ENCODE measurements at regions of chr13 and their contacts with region 1.

Region 1: DNA sequence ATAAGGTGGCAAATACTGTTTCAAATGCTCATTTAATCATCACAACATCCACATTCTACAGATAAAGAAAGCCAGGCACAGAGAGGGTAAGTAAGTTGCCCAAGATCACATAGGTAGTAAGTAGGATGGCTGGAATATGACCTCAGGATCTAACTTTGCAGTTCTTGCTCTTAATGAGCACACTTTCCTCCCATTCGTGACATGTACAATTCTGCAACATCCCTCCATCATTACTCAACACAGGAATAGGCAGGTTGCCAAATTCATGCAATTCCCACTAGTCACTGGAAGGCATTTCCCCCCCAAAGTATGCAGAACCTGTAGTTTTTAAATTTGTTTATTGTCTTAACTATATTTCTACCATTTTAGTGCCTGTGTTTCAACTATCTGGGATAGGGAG is 109.2 kb downstream of the OLFM4 start:
- DNase-seq: no peak
- H3K4me3 ChIP-seq: no peak overlapping the region
- H3K27ac ChIP-seq: no peak overlapping the region
- H3K27me3 ChIP-seq: peaks cover 0 to 5% (median 0%) of the 10 kb centered on the region in 45 donors
- CTCF ChIP-seq: no peak

Region 2: DNA sequence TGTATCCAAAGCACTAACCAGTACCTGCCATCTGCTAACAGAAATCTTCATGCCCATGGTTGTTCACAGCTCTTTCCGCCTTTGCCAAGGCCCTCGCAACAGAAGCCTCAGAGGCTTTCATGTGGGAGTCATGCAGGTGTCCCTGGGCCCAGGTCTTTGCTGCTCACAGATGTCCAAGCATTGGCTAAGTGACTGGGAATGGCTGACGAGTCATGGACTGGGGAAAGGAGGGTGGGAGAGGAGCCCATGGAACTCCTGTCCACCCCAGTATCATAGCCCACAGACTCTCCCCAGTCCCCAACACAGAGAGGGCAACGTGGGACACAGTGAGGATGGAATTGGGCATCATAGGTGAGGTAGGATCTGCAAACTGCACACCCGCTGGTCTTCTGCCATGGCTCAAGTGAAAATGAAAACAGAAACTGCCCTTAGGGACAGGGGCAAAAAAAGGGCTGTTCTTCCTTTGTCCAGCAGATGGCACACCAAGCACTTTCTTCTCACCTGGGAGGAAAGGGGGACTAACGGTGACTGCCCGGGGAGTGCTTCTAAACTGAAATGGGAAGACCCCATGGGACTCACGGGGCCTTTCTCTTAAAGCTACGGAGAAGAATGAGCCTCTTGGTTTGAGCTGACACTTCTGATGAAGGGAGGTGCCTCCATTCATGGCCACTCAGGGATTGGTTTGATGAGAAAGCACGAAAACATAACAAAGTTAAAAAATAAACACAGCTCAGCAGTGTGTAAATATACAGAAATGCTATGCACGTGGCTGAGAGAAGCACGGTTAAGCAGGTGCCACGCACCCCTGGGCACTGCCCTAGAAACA is 1322.7 kb before region 1 on chr13:
- intact Hi-C with region 1: no loop called
- DNase-seq: peak in 4 of 10 donors; percentile 28 to 57 (median 52)
- H3K4me3 ChIP-seq: peak overlapping the region in 39 of 59 donors; percentile 3 to 48 (median 26)
- H3K27ac ChIP-seq: peak overlapping the region in 2 of 59 donors; percentile 10 to 46
- H3K27me3 ChIP-seq: no peaks in the 10 kb centered on the region
- CTCF ChIP-seq: peak; percentile 67 to 92 (median 83)

Region 3: GRCh38 chr13:52961196-52961910 is 176.4 kb before region 1 on chr13:
- intact Hi-C with region 1: loop called in 1 of 2 experiments (anchors 5 kb)
- DNase-seq: no peak
- H3K4me3 ChIP-seq: no peak overlapping the region
- H3K27ac ChIP-seq: no peak overlapping the region
- H3K27me3 ChIP-seq: no peaks in the 10 kb centered on the region
- CTCF ChIP-seq: no peak

Region 4: DNA sequence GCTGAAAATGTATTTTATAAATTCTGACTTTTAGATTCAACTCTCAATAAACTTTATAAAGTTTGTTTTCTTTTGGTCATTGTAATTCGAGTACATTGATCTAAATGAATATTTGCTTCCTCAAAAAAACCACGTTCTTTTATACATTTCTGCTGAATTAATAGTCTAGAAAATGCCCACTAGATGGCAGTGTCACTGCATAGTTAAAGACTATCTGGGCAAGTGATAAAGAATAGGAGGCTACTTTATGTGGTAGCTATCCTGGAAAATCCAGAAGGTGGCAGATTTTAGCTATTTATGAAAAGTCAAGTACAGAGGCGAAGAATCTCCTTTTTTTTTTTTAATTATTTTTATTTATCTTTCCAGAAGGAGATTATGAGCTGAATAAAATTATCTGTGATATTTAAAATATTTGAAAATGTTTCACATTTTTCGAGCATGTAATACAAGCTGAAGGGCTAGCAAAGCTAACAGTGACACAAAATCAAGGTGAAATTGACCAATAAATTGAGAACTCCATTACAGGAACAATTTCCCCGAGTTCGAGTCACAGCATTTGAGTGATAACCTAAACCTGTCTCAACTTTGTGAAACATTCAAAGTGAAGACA is 112.6 kb after region 1 on chr13:
- intact Hi-C with region 1: no loop called
- DNase-seq: peak in 1 of 10 donors; percentile 44
- H3K4me3 ChIP-seq: no peak overlapping the region
- H3K27ac ChIP-seq: peak overlapping the region in 12 of 59 donors; percentile 2 to 66 (median 38)
- H3K27me3 ChIP-seq: peaks cover 0 to 4% (median 0%) of the 10 kb centered on the region in 45 donors
- CTCF ChIP-seq: peak; percentile 87 to 100 (median 95)

Region 5: DNA sequence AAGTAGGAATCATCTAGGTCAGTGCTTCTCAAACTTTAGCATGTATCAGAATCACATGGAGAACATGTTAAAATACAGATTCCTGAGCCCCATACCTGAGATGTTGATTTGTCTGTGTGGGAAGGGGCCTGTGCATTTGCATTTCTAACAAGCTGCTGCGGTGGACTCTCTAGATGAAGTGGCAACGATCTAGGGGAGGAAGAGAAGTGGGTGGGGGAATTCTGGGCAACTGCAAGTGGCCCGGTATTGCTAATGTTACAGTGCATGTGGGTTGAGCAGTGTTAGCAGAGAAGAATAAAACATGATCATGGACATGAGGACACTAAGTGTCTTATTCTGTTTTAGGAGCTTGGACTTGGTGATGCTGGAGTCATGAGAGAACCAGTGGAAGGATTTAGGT is 219.8 kb after region 1 on chr13:
- intact Hi-C with region 1: no loop called
- DNase-seq: no peak
- H3K4me3 ChIP-seq: no peak overlapping the region
- H3K27ac ChIP-seq: no peak overlapping the region
- H3K27me3 ChIP-seq: no peaks in the 10 kb centered on the region
- CTCF ChIP-seq: no peak